ENCODE measurements at regions of chr2 and their contacts with region 1.

Region 1: GRCh38 chr2:101001691-101002561 is at the start of gene RPL31:
- DNase-seq: peak; percentile 90 to 98 (median 95)
- ATAC-seq: peak; percentile 97
- H3K4me3 ChIP-seq: peak within 1 kb of the TSS; percentile 92 to 95
- H3K4me3 Mint-ChIP-seq: peak within 1 kb of the TSS; percentile 95
- H3K27ac ChIP-seq: peak within 1 kb of the TSS; percentile 81 to 90
- H3K27ac Mint-ChIP-seq: peak within 1 kb of the TSS; percentile 98
- H3K4me1 ChIP-seq: peaks cover 27% of the 10 kb centered on the region
- H3K4me1 Mint-ChIP-seq: peaks cover 51% of the 10 kb centered on the region
- H3K27me3 ChIP-seq: no peaks in the 10 kb centered on the region
- H3K27me3 Mint-ChIP-seq: no peaks in the 10 kb centered on the region
- CTCF ChIP-seq: no peak
- total RNA-seq, gene RPL31: 2,776 to 2,895 TPM

Region 2: DNA sequence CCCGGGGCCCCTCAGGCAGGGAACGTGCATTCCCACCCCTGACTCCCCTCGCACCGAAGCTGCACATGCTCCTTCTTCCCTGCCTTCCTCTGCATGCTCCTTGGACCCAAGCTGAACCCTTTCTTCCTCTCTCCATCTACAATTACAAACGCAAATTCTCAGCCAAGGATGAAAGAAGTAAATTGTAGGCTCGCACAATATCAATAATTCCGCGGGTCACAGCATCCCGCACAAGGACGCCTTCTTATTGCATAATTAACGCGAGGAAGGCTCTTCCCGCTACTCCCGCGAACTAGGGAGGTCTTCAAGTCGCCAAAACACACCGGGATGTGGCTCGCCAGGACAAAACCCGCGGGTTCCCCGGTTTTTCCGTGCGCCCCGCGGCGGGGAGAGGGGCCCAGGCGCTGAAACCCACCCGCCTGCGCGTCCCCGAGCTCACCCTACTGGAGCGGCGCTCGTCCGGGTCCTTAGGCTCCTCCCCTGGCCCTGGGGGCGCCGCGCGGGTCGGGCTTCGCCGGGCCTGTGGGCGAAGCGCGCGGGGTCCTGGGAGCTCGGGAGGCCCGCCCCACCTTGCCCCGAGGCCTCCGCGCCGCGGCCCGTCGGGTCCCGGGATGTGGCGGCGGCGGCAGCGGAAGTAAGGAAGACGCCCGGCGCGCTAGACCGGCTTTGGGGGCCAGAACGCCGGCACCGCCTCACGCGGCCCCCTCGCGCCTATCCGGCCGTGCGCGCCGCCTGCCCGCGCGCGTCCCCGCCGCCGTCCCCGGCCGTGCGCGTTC is 584.8 kb before region 1 on chr2 and contains the start of gene CHST10:
- CTCF ChIA-PET with region 1: no interaction called
- POLR2A ChIA-PET with region 1: no interaction called
- intact Hi-C with region 1: loop called in 1 of 2 experiments (anchors 5 kb)
- DNase-seq: peak; percentile 18 to 76 (median 48)
- ATAC-seq: peak; percentile 92
- H3K4me3 ChIP-seq: peak within 1 kb of the TSS; percentile 78 to 93
- H3K4me3 Mint-ChIP-seq: peak within 1 kb of the TSS; percentile 85
- H3K27ac ChIP-seq: peak within 1 kb of the TSS; percentile 37 to 44
- H3K27ac Mint-ChIP-seq: peak within 1 kb of the TSS; percentile 30
- H3K4me1 ChIP-seq: peaks cover 8% of the 10 kb centered on the region
- H3K4me1 Mint-ChIP-seq: peaks cover 32% of the 10 kb centered on the region
- H3K27me3 ChIP-seq: no peaks in the 10 kb centered on the region
- H3K27me3 Mint-ChIP-seq: no peaks in the 10 kb centered on the region
- CTCF ChIP-seq: no peak
- total RNA-seq, gene CHST10: 6.0 to 7.6 TPM

Region 3: DNA sequence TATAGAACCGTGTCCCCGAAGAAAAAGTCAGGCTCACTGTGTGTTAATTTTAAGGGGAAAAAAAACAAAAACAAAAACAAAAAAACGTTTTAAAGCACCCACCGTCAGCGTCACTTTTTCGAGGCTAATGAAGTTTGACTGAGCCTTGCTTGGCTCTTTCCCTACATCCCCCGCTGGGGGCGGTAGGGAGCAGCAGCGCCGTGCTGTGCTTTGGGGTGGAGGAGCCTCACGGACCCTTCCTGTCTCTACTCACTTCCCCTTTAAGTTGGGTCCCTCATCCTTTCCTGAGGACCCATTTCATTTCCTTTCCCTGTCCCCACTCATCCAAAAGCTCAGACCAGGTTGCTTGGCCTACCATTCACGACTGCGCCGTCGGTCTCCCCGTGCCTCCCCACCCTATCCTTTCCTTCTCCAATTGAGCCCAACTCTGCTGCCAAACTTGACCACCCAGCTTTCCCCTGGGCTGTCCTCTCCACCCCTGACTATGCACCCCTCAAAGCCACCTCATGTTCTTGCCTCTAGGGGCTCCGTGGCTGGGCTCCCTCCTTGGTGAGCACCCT is 82.5 kb before region 1 on chr2:
- CTCF ChIA-PET with region 1: no interaction called
- POLR2A ChIA-PET with region 1: no interaction called
- intact Hi-C with region 1: no loop called
- DNase-seq: peak in 2 of 9 experiments; percentile 15 to 37
- ATAC-seq: peak; percentile 38
- H3K4me3 ChIP-seq: no peak overlapping the region
- H3K4me3 Mint-ChIP-seq: no peak overlapping the region
- H3K27ac ChIP-seq: no peak overlapping the region
- H3K27ac Mint-ChIP-seq: no peak overlapping the region
- H3K4me1 ChIP-seq: no peaks in the 10 kb centered on the region
- H3K4me1 Mint-ChIP-seq: peaks cover 4% of the 10 kb centered on the region
- H3K27me3 ChIP-seq: no peaks in the 10 kb centered on the region
- H3K27me3 Mint-ChIP-seq: peaks cover 2% of the 10 kb centered on the region
- CTCF ChIP-seq: peak; percentile 46

Region 4: GRCh38 chr2:101151141-101151858 is 149.4 kb after region 1 on chr2 and contains the start of gene TBC1D8:
- CTCF ChIA-PET with region 1: no interaction called
- POLR2A ChIA-PET with region 1: interaction called, 3 read pairs
- intact Hi-C with region 1: loop called in 1 of 2 experiments (anchors 2 kb)
- DNase-seq: peak in 8 of 9 experiments; percentile 45 to 78 (median 56)
- ATAC-seq: peak; percentile 83
- H3K4me3 ChIP-seq: peak within 1 kb of the TSS; percentile 38 to 56
- H3K4me3 Mint-ChIP-seq: peak within 1 kb of the TSS; percentile 87
- H3K27ac ChIP-seq: peak within 1 kb of the TSS in 1 of 2 experiments; percentile 40
- H3K27ac Mint-ChIP-seq: no peak within 1 kb of the TSS
- H3K4me1 ChIP-seq: peaks cover 25% of the 10 kb centered on the region
- H3K4me1 Mint-ChIP-seq: peaks cover 25% of the 10 kb centered on the region
- H3K27me3 ChIP-seq: peaks cover 0 to 6% of the 10 kb centered on the region in 2 experiments
- H3K27me3 Mint-ChIP-seq: peaks cover 8% of the 10 kb centered on the region
- CTCF ChIP-seq: no peak
- total RNA-seq, gene TBC1D8: 0.47 to 1.1 TPM

Measured in CD8-positive, alpha-beta T cell (primary cell).